Transverse colon (tissue), 4 donors: ENCODE measurements at regions of chr14 and their contacts with region 1.

Region 1: GRCh38 chr14:85071447-85071846 is 458.5 kb upstream of the FLRT2 start:
- DNase-seq: no peak
- H3K4me3 ChIP-seq: no peak overlapping the region
- H3K27ac ChIP-seq: no peak overlapping the region
- H3K4me1 ChIP-seq: no peaks in the 10 kb centered on the region
- H3K27me3 ChIP-seq: no peaks in the 10 kb centered on the region
- CTCF ChIP-seq: no peak
- EP300 ChIP-seq: no peak
- POLR2A ChIP-seq: no peak

Region 2: DNA sequence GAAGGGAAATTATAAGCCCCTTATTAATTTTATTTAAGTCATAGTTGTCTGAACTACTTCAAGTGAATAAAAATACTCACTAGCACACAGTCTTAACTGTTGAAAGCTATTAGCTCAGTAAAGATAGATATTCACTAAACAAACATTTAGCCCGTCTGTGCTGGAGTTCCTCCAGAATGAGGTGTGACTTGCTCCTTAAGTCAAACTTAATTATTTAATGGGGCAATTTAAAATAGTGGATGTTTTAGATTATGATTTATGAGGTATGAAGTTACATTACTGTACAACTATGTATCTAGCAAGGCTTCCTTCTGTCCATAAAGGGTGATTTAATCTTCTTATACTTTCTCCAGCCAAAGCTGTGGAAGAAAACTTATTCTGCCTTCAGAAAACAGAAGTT is 44.5 kb after region 1 on chr14:
- in situ Hi-C with region 1: no loop called
- intact Hi-C with region 1: loop called (anchors 2 kb)
- DNase-seq: no peak
- H3K4me3 ChIP-seq: no peak overlapping the region
- H3K27ac ChIP-seq: no peak overlapping the region
- H3K4me1 ChIP-seq: no peaks in the 10 kb centered on the region
- H3K27me3 ChIP-seq: no peaks in the 10 kb centered on the region
- CTCF ChIP-seq: no peak
- EP300 ChIP-seq: no peak
- POLR2A ChIP-seq: no peak

Region 3: DNA sequence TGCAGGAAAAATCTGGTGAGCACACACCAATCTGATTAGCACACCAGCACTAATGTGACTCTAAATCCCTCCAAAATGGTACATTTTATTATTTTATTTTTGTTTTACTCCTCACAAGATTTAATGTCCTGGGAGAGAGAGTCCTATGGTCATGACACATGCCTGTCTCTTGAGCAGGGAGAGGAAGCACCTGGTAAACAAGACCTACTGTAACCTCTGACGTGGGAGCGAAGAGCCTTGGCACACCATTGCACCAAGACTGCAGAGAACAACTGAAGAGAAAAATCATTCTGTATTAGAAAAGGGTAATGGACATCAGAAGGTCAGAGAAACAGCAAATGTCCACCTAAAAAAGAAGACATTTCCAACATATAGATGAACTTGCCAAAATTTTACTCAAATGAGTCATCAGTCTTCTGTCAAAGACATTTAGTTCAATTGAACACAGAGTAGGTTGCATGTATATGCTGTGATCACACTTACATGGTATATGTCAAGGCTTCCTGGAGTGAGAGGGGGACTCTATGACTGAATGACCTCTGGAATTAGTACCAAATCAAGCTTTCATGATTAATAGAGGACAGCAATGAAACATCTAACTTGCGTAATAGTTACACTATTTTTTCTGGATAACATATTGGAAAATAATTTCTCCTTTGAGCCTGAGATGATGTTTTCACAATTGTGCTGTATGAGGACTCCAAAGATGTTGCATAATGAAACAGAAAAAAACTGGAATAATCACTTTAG is 271.6 kb after region 1 on chr14:
- in situ Hi-C with region 1: no loop called
- intact Hi-C with region 1: no loop called
- DNase-seq: no peak
- H3K4me3 ChIP-seq: no peak overlapping the region
- H3K27ac ChIP-seq: no peak overlapping the region
- H3K4me1 ChIP-seq: no peaks in the 10 kb centered on the region
- H3K27me3 ChIP-seq: no peaks in the 10 kb centered on the region
- CTCF ChIP-seq: no peak
- EP300 ChIP-seq: no peak
- POLR2A ChIP-seq: no peak